ENCODE measurements at regions of chr22 and their contacts with region 1.

Region 1: DNA sequence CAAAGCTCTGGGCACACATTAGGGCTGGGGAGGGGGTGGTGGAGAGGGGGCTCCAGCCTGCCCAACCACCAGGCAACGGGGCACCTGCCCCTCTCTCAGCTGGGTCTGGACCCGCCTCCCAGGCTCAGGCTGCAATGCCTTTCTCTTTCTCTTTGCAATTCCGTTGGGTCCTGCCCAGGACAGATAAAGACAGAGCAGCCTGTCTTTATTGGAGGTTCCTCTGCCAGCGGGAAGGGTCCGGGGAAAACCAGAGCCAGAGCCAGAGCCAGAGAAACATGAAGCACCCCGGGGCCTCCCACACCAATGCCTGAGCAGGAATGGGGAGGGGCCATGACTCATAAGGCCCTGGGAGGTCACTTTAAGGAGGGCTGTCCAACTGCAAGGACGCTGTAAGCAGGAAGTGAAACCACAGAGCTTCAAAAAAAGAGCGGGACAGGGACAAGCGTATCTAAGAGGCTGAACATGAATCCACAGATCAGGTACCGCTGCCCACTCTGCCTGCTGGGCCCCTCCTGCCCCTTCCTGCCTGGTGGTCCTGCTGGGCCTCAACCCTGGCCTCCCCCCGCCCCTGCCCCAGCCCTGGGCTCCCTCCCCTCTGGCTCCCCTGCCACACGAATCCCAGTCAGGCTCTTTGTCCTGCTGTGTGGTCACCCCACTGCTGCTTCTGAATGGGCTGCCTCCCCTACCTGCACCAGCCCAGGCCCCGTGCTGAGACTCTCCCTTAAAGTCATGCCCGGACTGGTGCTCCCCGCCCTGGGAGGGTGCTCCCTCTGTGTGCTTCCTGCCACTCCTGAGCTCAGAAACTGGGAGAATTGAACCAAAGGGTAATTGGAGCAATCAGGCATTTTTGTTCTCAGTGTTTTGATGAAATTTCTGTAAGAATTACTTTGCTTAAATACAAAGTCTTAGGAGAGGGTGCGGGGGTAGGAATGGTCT is at the start of gene APOBEC3B:
- DNase-seq: peak; percentile 75
- H3K4me3 Mint-ChIP-seq: peak within 1 kb of the TSS; percentile 75
- H3K27ac Mint-ChIP-seq: peak within 1 kb of the TSS; percentile 91
- H3K4me1 Mint-ChIP-seq: peaks cover 53% of the 10 kb centered on the region
- H3K27me3 Mint-ChIP-seq: no peaks in the 10 kb centered on the region
- total RNA-seq, gene APOBEC3B: 17.9 and 19.5 TPM in 2 replicates

Region 2: DNA sequence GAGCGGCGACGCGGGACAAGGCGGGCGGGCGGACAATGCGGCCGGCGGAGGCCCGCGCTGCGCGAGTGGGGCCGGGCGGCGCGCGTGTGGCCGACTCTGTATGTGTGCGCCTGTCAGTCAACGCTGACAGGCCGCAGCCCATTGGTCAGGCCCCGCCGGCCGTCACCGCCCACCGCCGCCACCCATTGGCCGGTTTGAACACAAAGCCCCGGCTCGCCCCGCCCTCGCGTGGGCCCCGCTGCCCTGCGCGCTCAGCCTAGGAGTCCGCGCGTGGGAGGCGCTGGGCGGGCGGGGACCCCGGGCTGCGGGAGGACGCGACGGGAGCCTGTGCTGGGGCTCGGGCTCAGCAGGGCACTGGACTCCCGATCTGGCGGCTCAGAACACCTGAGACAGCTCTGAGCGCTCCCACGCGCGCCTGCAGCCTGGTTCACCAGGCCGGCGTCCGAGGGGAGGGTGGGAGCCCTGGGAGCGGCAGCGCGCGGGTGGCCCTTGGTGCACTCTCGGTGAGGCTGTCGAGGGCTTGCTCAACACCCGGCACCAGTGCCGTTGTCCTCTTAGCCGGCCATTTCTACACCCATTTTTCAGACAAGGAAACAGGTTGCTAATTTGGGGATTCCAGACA is 226.2 kb before region 1 on chr22 and contains the start of gene SUN2:
- intact Hi-C with region 1: loop called (anchors 10 kb)
- DNase-seq: peak; percentile 94
- H3K4me3 Mint-ChIP-seq: peak within 1 kb of the TSS; percentile 95
- H3K27ac Mint-ChIP-seq: peak within 1 kb of the TSS; percentile 97
- H3K4me1 Mint-ChIP-seq: peaks cover 59% of the 10 kb centered on the region
- H3K27me3 Mint-ChIP-seq: no peaks in the 10 kb centered on the region
- total RNA-seq, gene SUN2: 146 and 154 TPM in 2 replicates

Region 3: DNA sequence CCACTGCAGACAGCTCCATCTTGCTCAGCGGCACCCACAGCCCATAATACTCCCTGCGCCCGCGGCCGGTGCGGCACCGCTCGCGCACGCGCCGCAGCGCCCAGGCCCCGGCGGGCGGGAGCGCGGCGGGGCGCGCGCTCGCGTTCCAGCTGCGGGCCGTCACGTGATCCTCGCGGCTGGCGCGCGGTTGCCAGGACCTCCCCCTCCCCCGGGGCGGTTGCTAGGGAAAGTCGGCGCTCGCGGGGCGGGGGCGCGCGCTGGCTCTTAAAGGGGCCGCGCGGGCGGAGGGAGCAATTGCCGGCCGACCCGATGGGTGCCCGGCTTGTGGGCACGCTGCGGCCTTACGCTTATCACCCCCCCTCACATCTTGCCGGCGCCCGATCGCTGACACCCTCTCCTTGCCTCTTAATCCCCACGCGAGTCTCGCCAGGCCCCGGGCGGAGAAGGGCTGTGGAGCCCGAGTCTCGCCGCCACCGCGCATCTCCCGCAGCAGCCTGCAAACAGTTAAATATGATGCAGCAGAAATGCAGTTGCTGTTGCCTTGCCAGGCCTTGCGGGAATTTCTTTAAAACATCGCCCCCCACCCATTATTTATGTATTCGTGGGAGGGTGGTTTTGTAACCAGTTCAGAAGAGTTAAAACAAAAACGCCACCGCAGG is 110.0 kb before region 1 on chr22 and contains the start of gene CBX6:
- intact Hi-C with region 1: loop called (anchors 1 kb)
- DNase-seq: peak; percentile 94
- H3K4me3 Mint-ChIP-seq: peak within 1 kb of the TSS; percentile 89
- H3K27ac Mint-ChIP-seq: peak within 1 kb of the TSS; percentile 91
- H3K4me1 Mint-ChIP-seq: peaks cover 59% of the 10 kb centered on the region
- H3K27me3 Mint-ChIP-seq: peaks cover 2% of the 10 kb centered on the region
- total RNA-seq, gene CBX6: 171 and 178 TPM in 2 replicates

Region 4: DNA sequence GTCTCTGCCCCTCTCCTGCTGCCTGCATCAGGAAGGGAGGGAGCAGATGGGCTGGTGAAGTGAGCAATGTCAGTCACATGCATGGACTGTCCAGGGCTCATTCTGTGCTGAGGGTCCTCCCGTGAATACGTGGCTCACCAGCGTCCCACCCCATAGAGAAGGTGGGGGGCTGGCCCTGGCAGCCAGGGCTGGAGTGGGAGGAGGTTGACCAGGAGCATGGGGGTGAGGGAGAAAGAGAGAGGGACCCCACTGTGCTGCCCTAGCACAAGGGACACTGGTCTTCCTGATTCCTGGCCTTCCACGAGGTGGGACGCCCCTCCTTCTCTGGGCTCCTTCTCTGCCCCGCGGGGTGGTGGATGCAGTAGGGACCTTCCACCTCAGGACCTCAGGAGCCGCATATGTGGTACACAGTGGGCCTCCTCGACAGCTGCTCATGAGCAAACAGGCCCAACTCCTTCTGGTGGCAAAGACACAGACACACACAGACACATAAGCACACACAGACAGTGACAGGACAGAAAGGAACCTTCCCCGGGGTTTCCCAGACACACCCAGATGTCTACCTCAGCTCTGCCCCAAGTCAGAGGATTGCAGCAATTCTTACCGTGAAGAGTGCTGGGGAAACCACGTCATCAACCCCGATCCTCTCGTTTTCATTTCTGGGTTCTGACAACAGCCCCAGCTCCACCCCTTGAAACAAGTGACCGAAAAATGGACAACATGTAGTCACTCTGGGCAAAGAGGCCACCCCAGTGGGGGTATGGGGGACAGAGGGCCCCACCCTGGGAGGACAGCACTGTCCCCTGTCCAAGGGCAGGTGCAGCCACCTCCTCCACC is 28.5 kb before region 1 on chr22:
- intact Hi-C with region 1: loop called (anchors 1 kb)
- DNase-seq: peak; percentile 84
- H3K4me3 Mint-ChIP-seq: peak overlapping the region; percentile 63
- H3K27ac Mint-ChIP-seq: peak overlapping the region; percentile 98
- H3K4me1 Mint-ChIP-seq: peaks cover 67% of the 10 kb centered on the region
- H3K27me3 Mint-ChIP-seq: peaks cover 6% of the 10 kb centered on the region

Region 5: DNA sequence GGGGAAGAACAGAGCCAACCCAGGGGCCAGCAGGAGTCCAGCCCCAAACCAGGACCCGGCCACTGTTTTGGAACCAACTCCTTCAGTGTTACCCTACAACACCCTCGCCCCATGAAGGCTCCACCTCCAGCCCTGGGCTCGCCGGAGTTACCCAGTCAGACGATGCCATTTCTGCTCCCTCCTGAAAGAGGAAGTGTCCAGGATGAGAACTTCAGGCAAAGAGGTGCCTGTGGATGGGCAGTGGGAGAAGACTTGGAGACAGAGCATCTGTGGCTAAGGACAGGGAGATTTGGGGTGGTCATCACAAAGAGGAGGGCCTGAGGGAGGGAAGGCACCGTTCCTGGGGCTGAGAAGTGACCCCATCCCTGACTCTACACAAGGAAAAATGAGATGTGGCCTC is 13.8 kb after region 1 on chr22:
- intact Hi-C with region 1: no loop called
- DNase-seq: no peak
- H3K4me3 Mint-ChIP-seq: no peak overlapping the region
- H3K27ac Mint-ChIP-seq: peak overlapping the region; percentile 2
- H3K4me1 Mint-ChIP-seq: peaks cover 13% of the 10 kb centered on the region
- H3K27me3 Mint-ChIP-seq: peaks cover 22% of the 10 kb centered on the region

Region 6: GRCh38 chr22:39013942-39014722 is 31.9 kb after region 1 on chr22 and contains the start of gene APOBEC3C:
- intact Hi-C with region 1: loop called (anchors 1 kb)
- DNase-seq: peak; percentile 80
- H3K4me3 Mint-ChIP-seq: peak within 1 kb of the TSS; percentile 98
- H3K27ac Mint-ChIP-seq: peak within 1 kb of the TSS; percentile 91
- H3K4me1 Mint-ChIP-seq: peaks cover 25% of the 10 kb centered on the region
- H3K27me3 Mint-ChIP-seq: peaks cover 4% of the 10 kb centered on the region
- total RNA-seq, gene APOBEC3C: 71.5 and 73.2 TPM in 2 replicates

Region 7: GRCh38 chr22:39319270-39320022 is 337.2 kb after region 1 on chr22 and contains the start of gene RPL3:
- intact Hi-C with region 1: loop called (anchors 1 kb)
- DNase-seq: peak; percentile 96
- H3K4me3 Mint-ChIP-seq: peak within 1 kb of the TSS; percentile 99
- H3K27ac Mint-ChIP-seq: peak within 1 kb of the TSS; percentile 99
- H3K4me1 Mint-ChIP-seq: peaks cover 42% of the 10 kb centered on the region
- H3K27me3 Mint-ChIP-seq: no peaks in the 10 kb centered on the region
- total RNA-seq, gene RPL3: 1,905 and 1,941 TPM in 2 replicates